ENCODE measurements at regions of chr11 and their contacts with region 1.

Region 1: DNA sequence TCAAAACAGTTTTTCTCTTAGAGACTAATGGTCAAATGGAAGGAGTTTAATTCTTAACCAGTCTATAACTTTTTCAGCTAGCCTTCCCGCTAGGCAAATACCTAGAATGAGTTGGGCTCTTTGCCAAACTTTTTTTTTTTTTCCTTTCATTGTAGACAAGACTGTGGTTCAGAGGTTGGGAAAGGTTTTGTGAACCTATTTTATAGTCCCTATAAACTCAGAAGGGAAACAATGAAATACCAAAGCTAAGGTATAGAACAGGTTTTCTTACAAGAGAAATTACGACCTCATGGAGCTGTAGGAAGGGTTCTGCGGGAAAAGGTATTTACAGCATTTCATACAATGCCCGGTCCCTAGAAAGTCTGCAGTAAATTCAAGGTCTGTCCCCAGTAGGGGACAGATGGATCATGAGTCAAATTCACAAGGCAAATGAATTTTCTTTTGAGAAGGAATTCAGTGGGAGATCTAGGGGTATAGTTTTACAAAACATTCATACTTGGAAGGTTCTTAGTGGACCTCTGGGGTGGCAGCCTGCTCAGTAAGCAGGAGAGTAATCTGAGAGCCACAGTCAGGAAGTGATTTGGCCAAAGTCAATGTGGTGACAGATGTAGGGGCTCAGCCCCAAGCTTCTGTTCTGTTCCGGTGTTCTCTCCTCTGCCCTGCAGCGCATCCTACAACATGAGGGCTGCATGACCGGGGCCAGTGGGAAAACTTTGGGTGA is 146.8 kb downstream of the DBX1 start:
- DNase-seq: peak; percentile 40
- ATAC-seq: peak; percentile 88

Region 2: DNA sequence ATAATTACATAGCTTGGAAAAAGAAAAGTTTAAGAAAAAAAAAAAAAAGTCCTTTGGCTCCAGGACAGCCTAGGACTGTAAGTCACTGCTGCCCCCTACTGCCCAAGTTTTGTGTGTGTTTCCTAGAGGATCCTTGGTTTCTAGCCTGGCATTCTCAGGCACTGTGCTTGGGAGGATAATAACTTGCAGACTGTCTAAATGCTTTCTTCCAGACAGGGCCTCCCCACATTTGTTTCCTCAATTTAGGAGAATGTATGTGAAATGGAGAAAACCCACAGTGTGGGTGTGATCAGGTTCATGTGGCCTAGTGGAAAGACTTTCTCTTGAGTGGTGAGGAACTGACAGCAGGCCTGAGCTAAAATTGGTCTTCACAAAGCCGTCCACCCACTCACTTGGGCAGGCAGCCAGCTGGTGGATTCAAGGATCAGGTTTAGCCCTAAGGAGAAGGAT is 109.9 kb before region 1 on chr11:
- intact Hi-C with region 1: no loop called
- DNase-seq: peak; percentile 67
- ATAC-seq: peak; percentile 78

Region 3: DNA sequence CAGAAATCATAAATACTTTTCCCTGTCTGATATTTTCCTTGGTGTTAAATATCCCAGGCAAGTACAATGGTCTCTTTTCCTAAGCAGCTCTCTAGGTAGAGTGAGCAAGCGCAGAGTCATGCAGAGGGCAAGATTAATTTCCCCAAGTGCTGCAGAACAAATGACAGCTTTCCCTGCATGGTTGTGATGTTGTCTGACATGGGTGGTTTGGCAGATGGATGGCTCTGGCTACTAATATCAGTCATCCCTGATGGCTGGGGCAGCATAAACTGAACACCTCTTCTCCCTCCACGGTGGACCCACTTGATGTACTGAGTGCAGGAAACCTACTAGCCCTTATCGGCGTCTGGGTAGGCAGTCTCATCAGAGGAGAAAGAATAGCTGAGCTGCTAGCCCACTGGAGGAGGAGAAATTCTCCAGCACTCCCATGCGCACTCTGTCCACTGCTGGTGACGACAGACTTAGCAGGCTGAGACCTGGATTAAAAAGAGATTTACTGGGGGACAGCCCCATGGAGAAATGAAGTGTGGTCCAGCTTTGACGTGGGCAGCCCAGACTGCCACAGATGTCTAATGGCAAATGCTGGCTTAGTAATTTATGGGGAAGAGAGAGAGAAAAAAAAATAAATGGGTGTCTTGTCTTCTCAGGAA is 56.1 kb before region 1 on chr11:
- intact Hi-C with region 1: loop called (anchors 2 kb)
- DNase-seq: no peak
- ATAC-seq: no peak